PC-9 (cell line): ENCODE measurements at regions of chr12 and their contacts with region 1.

Region 1: GRCh38 chr12:29519585-29520182 is 22.2 kb upstream of the OVCH1 start:
- DNase-seq: peak in 1 of 2 experiments; percentile 24
- H3K4me3 ChIP-seq: no peak overlapping the region
- H3K27ac ChIP-seq: no peak overlapping the region
- H3K4me1 ChIP-seq: no peaks in the 10 kb centered on the region
- H3K27me3 ChIP-seq: no peaks in the 10 kb centered on the region
- CTCF ChIP-seq: peak; percentile 84

Region 2: GRCh38 chr12:28780096-28780495 is 739.6 kb before region 1 on chr12:
- CTCF ChIA-PET with region 1: no interaction called
- POLR2A ChIA-PET with region 1: no interaction called
- intact Hi-C with region 1: no loop called
- DNase-seq: no peak
- H3K4me3 ChIP-seq: no peak overlapping the region
- H3K27ac ChIP-seq: no peak overlapping the region
- H3K4me1 ChIP-seq: no peaks in the 10 kb centered on the region
- H3K27me3 ChIP-seq: no peaks in the 10 kb centered on the region
- CTCF ChIP-seq: no peak

Region 3: GRCh38 chr12:29073628-29074239 is 445.9 kb before region 1 on chr12:
- CTCF ChIA-PET with region 1: no interaction called
- POLR2A ChIA-PET with region 1: no interaction called
- intact Hi-C with region 1: loop called (anchors 10 kb)
- DNase-seq: peak; percentile 15 to 42
- H3K4me3 ChIP-seq: no peak overlapping the region
- H3K27ac ChIP-seq: no peak overlapping the region
- H3K4me1 ChIP-seq: no peaks in the 10 kb centered on the region
- H3K27me3 ChIP-seq: no peaks in the 10 kb centered on the region
- CTCF ChIP-seq: peak; percentile 86

Region 4: GRCh38 chr12:29309320-29309902 is 210.3 kb before region 1 on chr12:
- CTCF ChIA-PET with region 1: interaction called, 3 read pairs
- POLR2A ChIA-PET with region 1: no interaction called
- intact Hi-C with region 1: loop called (anchors 1 kb)
- DNase-seq: no peak
- H3K4me3 ChIP-seq: no peak overlapping the region
- H3K27ac ChIP-seq: no peak overlapping the region
- H3K4me1 ChIP-seq: no peaks in the 10 kb centered on the region
- H3K27me3 ChIP-seq: no peaks in the 10 kb centered on the region
- CTCF ChIP-seq: peak; percentile 67

Region 5: GRCh38 chr12:29957835-29958234 is 438.2 kb after region 1 on chr12:
- CTCF ChIA-PET with region 1: no interaction called
- POLR2A ChIA-PET with region 1: no interaction called
- intact Hi-C with region 1: no loop called
- DNase-seq: no peak
- H3K4me3 ChIP-seq: no peak overlapping the region
- H3K27ac ChIP-seq: no peak overlapping the region
- H3K4me1 ChIP-seq: no peaks in the 10 kb centered on the region
- H3K27me3 ChIP-seq: no peaks in the 10 kb centered on the region
- CTCF ChIP-seq: no peak

Region 6: DNA sequence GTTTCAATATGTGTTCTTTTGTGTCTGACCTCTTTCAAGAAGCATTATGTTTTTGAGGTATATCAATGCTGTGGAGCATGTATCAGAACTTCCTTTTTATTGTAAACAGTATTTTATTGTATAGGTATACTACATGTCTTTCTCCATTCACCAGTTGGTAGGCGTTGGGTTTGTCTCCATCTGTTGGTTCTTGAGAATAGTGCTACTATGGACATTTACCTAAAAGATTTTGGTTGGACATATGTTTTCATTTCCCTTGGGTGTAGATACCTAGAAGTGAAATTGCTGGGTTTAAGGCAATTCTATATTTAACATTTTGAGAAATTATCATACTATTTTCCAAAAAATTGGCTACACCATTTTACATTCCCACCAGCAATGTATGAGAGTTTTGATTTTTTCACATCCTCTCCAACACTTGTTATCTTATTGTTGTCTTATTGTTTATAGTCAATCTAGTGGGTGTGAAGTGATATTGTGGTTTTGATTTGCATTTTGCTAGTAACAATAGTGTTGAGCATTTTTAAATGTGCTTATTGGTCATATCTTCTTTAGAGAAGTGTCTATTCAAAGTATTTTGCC is 766.8 kb after region 1 on chr12:
- CTCF ChIA-PET with region 1: no interaction called
- POLR2A ChIA-PET with region 1: no interaction called
- intact Hi-C with region 1: loop called (anchors 2 kb)
- DNase-seq: no peak
- H3K4me3 ChIP-seq: no peak overlapping the region
- H3K27ac ChIP-seq: no peak overlapping the region
- H3K4me1 ChIP-seq: no peaks in the 10 kb centered on the region
- H3K27me3 ChIP-seq: no peaks in the 10 kb centered on the region
- CTCF ChIP-seq: peak; percentile 67